ENCODE measurements at regions of chr2 and their contacts with region 1.

Region 1: DNA sequence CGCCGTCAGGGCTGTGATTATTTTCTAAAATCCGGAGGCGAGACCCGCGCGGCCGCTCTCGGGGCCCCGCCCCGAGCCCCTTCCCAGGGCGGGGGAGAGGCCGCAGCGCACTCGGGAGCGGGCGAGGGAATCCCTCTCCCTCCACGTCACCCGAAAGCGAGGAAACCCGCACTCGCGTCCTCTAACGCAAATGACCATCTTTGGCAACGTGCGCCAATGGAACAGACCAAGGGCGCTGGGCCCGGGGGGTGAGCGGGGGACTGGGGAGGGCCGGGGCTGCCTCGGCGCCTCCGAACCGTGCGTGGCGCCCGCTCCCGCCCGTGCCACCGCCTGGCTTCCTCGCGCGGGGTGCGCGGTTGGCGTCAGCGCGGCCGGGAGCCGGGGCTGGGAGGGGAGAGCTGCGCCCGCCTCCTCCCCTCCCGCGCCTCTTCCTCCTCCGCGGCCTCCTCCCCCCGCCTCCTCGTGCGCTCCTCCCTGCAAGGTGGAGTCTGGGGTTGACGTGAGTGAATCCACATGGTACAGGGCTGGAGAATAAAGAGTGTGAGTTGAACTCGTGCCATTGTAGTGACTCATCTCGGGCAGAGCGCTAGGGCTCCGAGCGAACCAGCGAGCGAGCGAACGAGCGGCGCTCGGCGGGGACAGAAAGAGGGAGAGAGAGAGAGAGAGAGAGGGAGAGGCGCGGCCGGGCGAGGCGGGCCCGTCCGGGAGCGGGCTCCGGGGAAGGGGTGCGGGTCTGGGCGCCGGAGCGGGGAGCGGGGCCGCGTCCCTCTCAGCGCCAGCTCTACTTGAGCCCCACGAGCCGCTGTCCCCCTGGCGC is at the start of gene FOSL2:
- DNase-seq: peak; percentile 98
- ATAC-seq: peak; percentile 77
- H3K4me3 ChIP-seq: peak within 1 kb of the TSS; percentile 69 to 85
- H3K27ac ChIP-seq: peak within 1 kb of the TSS; percentile 85
- H3K4me1 ChIP-seq: peaks cover 29% of the 10 kb centered on the region
- H3K27me3 ChIP-seq: no peaks in the 10 kb centered on the region
- CTCF ChIP-seq: peak; percentile 31
- total RNA-seq, gene FOSL2: 29.0 TPM

Region 2: GRCh38 chr2:27102329-27102728 is 1290.2 kb before region 1 on chr2:
- CTCF ChIA-PET with region 1: no interaction called
- POLR2A ChIA-PET with region 1: interaction called, 11 read pairs
- in situ Hi-C with region 1: no loop called
- intact Hi-C with region 1: no loop called
- DNase-seq: no peak
- ATAC-seq: no peak
- H3K4me3 ChIP-seq: no peak overlapping the region
- H3K27ac ChIP-seq: no peak overlapping the region
- H3K4me1 ChIP-seq: no peaks in the 10 kb centered on the region
- H3K27me3 ChIP-seq: no peaks in the 10 kb centered on the region
- CTCF ChIP-seq: no peak

Region 3: DNA sequence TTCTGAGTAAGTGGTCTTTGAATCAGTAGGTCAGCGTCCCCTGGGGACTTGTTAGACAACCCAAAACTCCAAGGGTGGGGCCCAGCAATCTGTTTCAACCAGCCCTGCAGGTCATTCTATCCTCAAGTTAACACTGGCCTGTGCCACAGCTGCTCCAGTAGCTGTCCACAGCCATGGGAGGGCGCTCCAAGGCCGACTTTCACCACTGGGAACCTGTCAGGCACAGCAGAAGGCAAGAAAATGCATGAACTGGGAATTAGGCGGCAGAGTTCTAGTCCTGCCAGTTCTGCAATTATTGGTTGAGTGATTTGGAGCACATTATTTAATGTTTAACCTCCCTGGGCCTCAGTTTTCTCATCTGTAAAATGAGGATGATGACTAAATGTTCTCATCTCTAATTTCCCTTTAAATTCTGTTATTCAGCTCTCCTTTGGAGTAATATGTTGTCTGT is 638.3 kb before region 1 on chr2:
- CTCF ChIA-PET with region 1: interaction called, 4 read pairs
- POLR2A ChIA-PET with region 1: no interaction called
- in situ Hi-C with region 1: no loop called
- intact Hi-C with region 1: loop called (anchors 1 kb)
- DNase-seq: peak; percentile 74
- ATAC-seq: peak; percentile 94
- H3K4me3 ChIP-seq: no peak overlapping the region
- H3K27ac ChIP-seq: no peak overlapping the region
- H3K4me1 ChIP-seq: peaks cover 9% of the 10 kb centered on the region; the same call in 1 of the 2 replicates
- H3K27me3 ChIP-seq: no peaks in the 10 kb centered on the region
- CTCF ChIP-seq: peak; percentile 93

Region 4: GRCh38 chr2:27942612-27943547 is 449.6 kb before region 1 on chr2:
- CTCF ChIA-PET with region 1: no interaction called
- POLR2A ChIA-PET with region 1: interaction called, 12 read pairs
- in situ Hi-C with region 1: no loop called
- intact Hi-C with region 1: no loop called
- DNase-seq: no peak
- ATAC-seq: no peak
- H3K4me3 ChIP-seq: no peak overlapping the region
- H3K27ac ChIP-seq: no peak overlapping the region
- H3K4me1 ChIP-seq: no peaks in the 10 kb centered on the region
- H3K27me3 ChIP-seq: no peaks in the 10 kb centered on the region
- CTCF ChIP-seq: no peak

Region 5: GRCh38 chr2:28155627-28156026 is 236.9 kb before region 1 on chr2:
- CTCF ChIA-PET with region 1: interaction called, 3 read pairs
- POLR2A ChIA-PET with region 1: no interaction called
- in situ Hi-C with region 1: no loop called
- intact Hi-C with region 1: loop called (anchors 10 kb)
- DNase-seq: no peak
- ATAC-seq: no peak
- H3K4me3 ChIP-seq: no peak overlapping the region
- H3K27ac ChIP-seq: no peak overlapping the region
- H3K4me1 ChIP-seq: peaks cover 7% of the 10 kb centered on the region; the same call in 1 of the 2 replicates
- H3K27me3 ChIP-seq: no peaks in the 10 kb centered on the region
- CTCF ChIP-seq: peak; percentile 73

Measured in Panc1 (cell line).